SK-N-SH (cell line): ENCODE measurements at regions of chr11 and their contacts with region 1.

Region 1: DNA sequence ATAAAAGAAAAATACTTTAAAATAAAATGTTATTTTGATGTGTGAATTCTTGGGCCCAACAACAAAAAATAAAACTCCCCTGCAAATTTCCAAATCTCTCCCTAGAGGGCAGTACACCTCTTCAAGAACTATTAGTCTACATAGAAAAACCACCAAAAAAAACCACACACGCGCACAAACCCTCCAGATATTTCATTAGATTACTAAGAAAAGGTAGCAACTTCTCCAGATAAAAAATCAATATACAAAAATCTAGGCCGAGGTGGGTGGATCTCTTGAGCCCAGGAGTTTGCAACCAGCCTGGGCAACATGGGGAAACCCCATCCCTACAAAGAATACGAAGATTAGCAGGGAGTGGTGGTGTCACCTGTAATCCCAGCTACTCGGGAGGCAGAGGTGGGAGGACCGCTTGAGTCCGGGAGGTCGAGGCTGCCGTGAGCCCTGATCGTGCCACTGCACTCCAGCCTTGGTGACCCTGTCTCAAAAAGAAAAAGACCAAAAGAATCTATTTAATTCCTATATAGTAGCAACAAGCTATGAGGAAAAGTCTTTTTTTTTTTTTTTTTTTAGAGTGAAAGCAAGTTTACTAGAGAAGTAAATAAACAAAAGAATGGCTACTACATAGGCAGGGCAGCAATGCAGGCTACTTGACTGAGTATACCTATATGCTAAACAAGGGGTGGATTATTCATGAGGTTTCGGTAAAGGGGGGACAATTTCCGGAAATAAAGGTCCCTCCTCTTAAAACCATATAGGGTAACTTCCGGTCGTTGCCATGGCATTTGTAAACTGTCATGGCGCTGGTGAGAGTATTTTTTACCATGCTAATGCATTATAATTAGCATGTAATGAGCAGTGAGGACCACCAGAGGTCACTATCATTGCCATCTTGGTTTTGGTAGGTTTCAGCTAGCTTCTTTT is 13.1 kb downstream of the B3GNT6 start:
- DNase-seq: peak; percentile 82
- H3K4me3 ChIP-seq: peak overlapping the region; percentile 34 to 67
- H3K27ac ChIP-seq: peak overlapping the region in 1 of 2 experiments; percentile 48; a peak in 1 of 4 replicates
- H3K4me1 ChIP-seq: peaks cover 3 to 6% of the 10 kb centered on the region in 2 experiments; a peak in 2 of 4 replicates
- H3K27me3 ChIP-seq: no peaks in the 10 kb centered on the region
- CTCF ChIP-seq: peak; percentile 79
- EP300 ChIP-seq: no peak
- RAD21 ChIP-seq: peak; percentile 74

Region 2: GRCh38 chr11:76987203-76987602 is 60.1 kb before region 1 on chr11:
- CTCF ChIA-PET with region 1: no interaction called
- POLR2A ChIA-PET with region 1: no interaction called
- DNase-seq: no peak
- H3K4me3 ChIP-seq: no peak overlapping the region
- H3K27ac ChIP-seq: no peak overlapping the region
- H3K4me1 ChIP-seq: no peaks in the 10 kb centered on the region
- H3K27me3 ChIP-seq: no peaks in the 10 kb centered on the region
- CTCF ChIP-seq: no peak
- EP300 ChIP-seq: no peak
- RAD21 ChIP-seq: no peak

Region 3: GRCh38 chr11:77066229-77067042 is 19.2 kb after region 1 on chr11 and contains the start of gene CAPN5:
- CTCF ChIA-PET with region 1: interaction called, 20 read pairs
- POLR2A ChIA-PET with region 1: no interaction called
- DNase-seq: peak; percentile 99
- H3K4me3 ChIP-seq: peak within 1 kb of the TSS; percentile 81 to 89
- H3K27ac ChIP-seq: peak within 1 kb of the TSS; percentile 69 to 94
- H3K4me1 ChIP-seq: peaks cover 9 to 39% of the 10 kb centered on the region in 2 experiments; a peak in 3 of 4 replicates
- H3K27me3 ChIP-seq: no peaks in the 10 kb centered on the region
- CTCF ChIP-seq: peak; percentile 41
- EP300 ChIP-seq: no peak
- RAD21 ChIP-seq: peak; percentile 32
- polyA plus RNA-seq, gene CAPN5: 31.6 and 33.1 TPM in 2 replicates

Region 4: GRCh38 chr11:77082838-77083562 is 35.7 kb after region 1 on chr11:
- CTCF ChIA-PET with region 1: interaction called, 218 read pairs
- POLR2A ChIA-PET with region 1: no interaction called
- DNase-seq: peak; percentile 82
- H3K4me3 ChIP-seq: no peak overlapping the region
- H3K27ac ChIP-seq: peak overlapping the region in 1 of 2 experiments; percentile 85; a peak in 2 of 4 replicates
- H3K4me1 ChIP-seq: peaks cover 0 to 30% of the 10 kb centered on the region in 2 experiments; a peak in 1 of 4 replicates
- H3K27me3 ChIP-seq: no peaks in the 10 kb centered on the region
- CTCF ChIP-seq: no peak
- EP300 ChIP-seq: no peak
- RAD21 ChIP-seq: no peak

Region 5: DNA sequence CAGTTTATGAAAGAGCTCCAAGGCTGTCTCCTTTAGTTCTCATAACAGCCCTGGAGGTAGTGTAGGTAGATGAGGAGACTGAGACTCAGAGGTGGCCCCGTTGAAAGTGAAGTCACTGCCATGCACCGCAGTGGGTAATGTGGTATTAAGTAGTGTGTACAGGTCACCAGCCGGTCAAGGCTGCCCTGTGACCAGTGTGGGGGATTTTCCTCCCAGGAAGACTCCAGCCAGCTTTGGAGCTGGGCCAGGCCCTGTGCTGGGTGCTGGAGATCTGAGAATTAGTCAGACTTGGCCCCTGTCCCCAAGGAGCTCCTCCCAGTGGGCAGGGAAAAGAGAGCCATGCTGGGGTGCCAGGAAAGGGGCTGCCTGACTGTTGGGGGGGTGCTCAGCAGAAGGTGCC is 60.7 kb after region 1 on chr11:
- CTCF ChIA-PET with region 1: interaction called, 23 read pairs
- POLR2A ChIA-PET with region 1: no interaction called
- DNase-seq: no peak
- H3K4me3 ChIP-seq: no peak overlapping the region
- H3K27ac ChIP-seq: peak overlapping the region in 1 of 2 experiments; percentile 82; a peak in 3 of 4 replicates
- H3K4me1 ChIP-seq: peaks cover 32 to 44% of the 10 kb centered on the region in 2 experiments; a peak in 3 of 4 replicates
- H3K27me3 ChIP-seq: no peaks in the 10 kb centered on the region
- CTCF ChIP-seq: no peak
- EP300 ChIP-seq: peak in 1 of 2 experiments; percentile 55; a peak in 1 of 4 replicates
- RAD21 ChIP-seq: no peak

Region 6: DNA sequence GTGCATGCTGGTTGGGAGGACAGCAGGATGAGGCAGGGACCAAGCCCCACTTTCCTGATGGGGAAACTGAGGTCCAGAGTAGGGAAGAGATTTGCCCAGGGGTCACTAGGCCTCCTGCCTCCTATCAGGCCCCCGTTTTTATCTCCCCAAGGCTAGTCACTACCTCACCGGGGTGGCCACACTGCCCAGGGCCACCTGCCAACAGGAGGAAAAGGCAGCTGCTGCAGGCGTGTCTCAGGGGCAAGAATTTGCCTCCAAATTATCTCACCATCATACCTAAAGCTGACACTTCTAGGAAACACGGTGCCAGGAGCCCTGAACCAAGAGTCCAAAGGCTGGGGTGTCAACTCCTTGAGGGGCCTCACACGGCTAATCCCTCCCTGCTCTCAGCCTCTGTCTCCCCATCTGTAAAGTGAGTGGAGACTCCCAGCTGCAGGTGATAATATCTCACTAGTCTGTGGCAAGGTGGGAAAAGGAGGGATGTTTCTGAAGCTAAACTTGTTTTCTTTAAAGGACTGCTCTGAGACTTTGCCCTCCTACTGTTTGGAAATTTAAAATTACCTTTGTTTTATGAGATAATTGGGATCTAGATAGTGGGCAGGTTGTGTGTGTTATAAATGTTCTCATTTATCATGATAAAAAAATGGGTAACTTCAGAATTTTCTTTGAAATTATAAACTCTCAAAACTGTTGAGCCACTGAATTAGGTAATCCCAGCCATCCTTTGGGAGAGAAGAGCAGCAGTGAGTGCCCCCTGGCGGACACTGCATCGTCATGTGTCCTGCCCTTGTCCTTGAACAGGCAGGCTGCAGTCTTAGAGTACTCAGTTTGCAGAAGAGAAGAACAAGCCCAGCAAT is 140.7 kb after region 1 on chr11:
- CTCF ChIA-PET with region 1: interaction called, 13 read pairs
- POLR2A ChIA-PET with region 1: no interaction called
- DNase-seq: peak; percentile 90
- H3K4me3 ChIP-seq: peak overlapping the region in 1 of 2 experiments; percentile 14; a peak in 1 of 4 replicates
- H3K27ac ChIP-seq: no peak overlapping the region
- H3K4me1 ChIP-seq: no peaks in the 10 kb centered on the region
- H3K27me3 ChIP-seq: no peaks in the 10 kb centered on the region
- CTCF ChIP-seq: peak; percentile 93
- EP300 ChIP-seq: no peak
- RAD21 ChIP-seq: peak; percentile 93